ENCODE measurements at regions of chr15 and their contacts with region 1.

Region 1: GRCh38 chr15:43370975-43371974 is at the starts of genes TUBGCP4 and ZSCAN29:
- DNase-seq: peak; percentile 76
- H3K4me3 Mint-ChIP-seq: peak within 1 kb of the TSS; percentile 95
- H3K27ac Mint-ChIP-seq: peak within 1 kb of the TSS; percentile 92
- H3K4me1 Mint-ChIP-seq: peaks cover 44% of the 10 kb centered on the region
- H3K27me3 Mint-ChIP-seq: no peaks in the 10 kb centered on the region
- CTCF ChIP-seq: peak; percentile 44
- total RNA-seq, gene TUBGCP4: 23.3 and 31.4 TPM in 2 replicates
- total RNA-seq, gene ZSCAN29: 38.7 and 38.9 TPM in 2 replicates

Region 2: GRCh38 chr15:43410572-43411214 is 39.4 kb after region 1 on chr15:
- CTCF ChIA-PET with region 1: interaction called, 10 read pairs
- POLR2A ChIA-PET with region 1: interaction called, 5 read pairs
- intact Hi-C with region 1: no loop called
- DNase-seq: peak; percentile 6
- H3K4me3 Mint-ChIP-seq: no peak overlapping the region
- H3K27ac Mint-ChIP-seq: no peak overlapping the region
- H3K4me1 Mint-ChIP-seq: no peaks in the 10 kb centered on the region
- H3K27me3 Mint-ChIP-seq: no peaks in the 10 kb centered on the region
- CTCF ChIP-seq: no peak